ENCODE measurements at regions of chr11 and their contacts with region 1.

Region 1: DNA sequence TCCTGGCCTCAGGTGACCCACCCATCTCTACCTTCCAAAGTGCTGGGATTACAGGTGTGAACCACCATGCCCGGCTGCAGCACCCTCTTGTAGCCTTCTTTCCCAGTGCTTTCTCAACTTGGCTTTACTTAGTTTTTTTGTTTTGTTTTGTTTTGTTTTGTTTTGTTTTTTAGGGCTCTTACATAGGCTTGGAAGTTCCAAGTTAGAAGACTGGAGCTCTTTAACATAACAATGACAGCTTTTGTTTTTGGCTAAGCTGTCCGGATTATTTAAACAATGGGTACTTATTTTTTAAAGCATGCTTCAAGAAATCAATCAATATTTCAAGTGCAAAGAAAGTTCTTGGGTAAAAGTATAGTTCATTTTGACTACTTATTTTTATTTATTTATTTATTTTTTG is 25.9 kb downstream of the KMT2A start:
- DNase-seq: no peak
- H3K4me3 ChIP-seq: no peak overlapping the region
- H3K27ac ChIP-seq: no peak overlapping the region
- H3K27me3 ChIP-seq: no peaks in the 10 kb centered on the region
- CTCF ChIP-seq: no peak

Region 2: DNA sequence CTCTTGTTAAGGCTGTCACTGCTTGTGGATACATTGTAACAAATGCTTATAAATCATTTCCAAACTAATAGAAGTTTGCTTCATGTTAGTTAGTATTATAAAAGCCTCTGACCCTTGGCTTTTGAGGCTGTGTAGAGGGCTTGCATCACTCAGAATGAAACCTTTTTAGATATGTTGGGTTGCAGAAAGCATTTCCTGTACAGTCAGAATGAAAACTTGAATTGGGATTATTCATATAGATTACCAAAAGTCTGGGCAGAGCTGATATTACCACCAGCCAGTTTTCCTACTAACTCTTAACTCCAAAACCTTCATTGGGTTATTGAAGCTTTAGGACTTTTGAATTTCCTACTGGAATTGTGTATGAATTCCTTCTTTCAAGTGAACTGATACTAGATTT is 13.9 kb before region 1 on chr11:
- CTCF ChIA-PET with region 1: no interaction called
- POLR2A ChIA-PET with region 1: interaction called, 12 read pairs
- DNase-seq: no peak
- H3K4me3 ChIP-seq: no peak overlapping the region
- H3K27ac ChIP-seq: no peak overlapping the region
- H3K27me3 ChIP-seq: no peaks in the 10 kb centered on the region
- CTCF ChIP-seq: no peak

Region 3: GRCh38 chr11:118552341-118552740 is 90.2 kb after region 1 on chr11:
- CTCF ChIA-PET with region 1: no interaction called
- POLR2A ChIA-PET with region 1: no interaction called
- DNase-seq: no peak
- H3K4me3 ChIP-seq: no peak overlapping the region
- H3K27ac ChIP-seq: no peak overlapping the region
- H3K27me3 ChIP-seq: no peaks in the 10 kb centered on the region
- CTCF ChIP-seq: no peak